MCF 10A (cell line): ENCODE measurements at regions of chr10 and their contacts with region 1.

Region 1: GRCh38 chr10:113058523-113058961 is 108.5 kb downstream of the TCF7L2 start:
- DNase-seq: peak; percentile 78
- H3K4me3 Mint-ChIP-seq: no peak overlapping the region
- H3K27ac Mint-ChIP-seq: no peak overlapping the region
- H3K4me1 Mint-ChIP-seq: peaks cover 15% of the 10 kb centered on the region
- H3K27me3 Mint-ChIP-seq: no peaks in the 10 kb centered on the region
- CTCF ChIP-seq: no peak

Region 2: GRCh38 chr10:112886463-112886862 is 172.1 kb before region 1 on chr10:
- CTCF ChIA-PET with region 1: no interaction called
- POLR2A ChIA-PET with region 1: no interaction called
- intact Hi-C with region 1: no loop called
- DNase-seq: no peak
- H3K4me3 Mint-ChIP-seq: no peak overlapping the region
- H3K27ac Mint-ChIP-seq: no peak overlapping the region
- H3K4me1 Mint-ChIP-seq: no peaks in the 10 kb centered on the region
- H3K27me3 Mint-ChIP-seq: no peaks in the 10 kb centered on the region
- CTCF ChIP-seq: no peak

Region 3: DNA sequence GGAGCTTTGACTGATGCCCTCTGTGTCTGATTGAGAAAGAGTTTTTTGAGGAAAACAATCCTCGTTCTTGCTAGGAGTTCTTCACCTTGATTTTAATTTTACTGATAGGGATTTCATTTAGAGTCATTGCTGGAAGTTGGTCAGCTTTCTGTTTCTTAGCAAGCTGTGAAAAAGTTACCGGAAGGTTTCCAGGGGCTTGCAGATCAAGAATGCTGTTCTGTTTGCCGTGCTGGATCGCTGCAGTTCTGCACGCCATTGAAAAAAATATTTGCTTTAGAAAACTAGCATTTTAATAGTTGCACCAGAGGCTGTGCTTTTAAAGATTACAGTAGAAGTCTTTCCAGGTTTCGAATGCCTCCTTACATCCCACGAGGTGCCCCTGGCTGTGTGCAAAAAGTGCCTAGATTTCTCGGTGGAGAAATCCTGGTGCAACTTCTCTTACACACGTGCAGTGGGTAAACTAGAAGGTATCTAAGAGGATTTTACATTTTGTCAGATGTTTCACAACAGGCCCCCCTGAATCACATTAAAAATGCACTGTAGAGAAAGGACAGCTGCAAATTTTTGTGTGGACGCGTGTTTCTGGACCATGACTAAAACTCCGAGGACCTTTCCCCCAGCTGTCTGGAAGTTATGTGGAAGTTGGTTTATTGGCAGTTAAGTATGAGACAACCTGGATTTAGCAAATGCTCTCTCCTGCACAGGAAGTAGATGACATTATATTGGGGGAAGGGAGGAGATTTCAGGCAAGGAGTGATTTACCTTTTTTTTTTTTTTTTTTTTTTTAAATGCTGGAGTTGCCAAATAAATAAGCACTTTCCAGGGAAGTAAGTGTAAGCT is 102.7 kb before region 1 on chr10:
- CTCF ChIA-PET with region 1: interaction called, 3 read pairs
- POLR2A ChIA-PET with region 1: interaction called, 37 read pairs
- intact Hi-C with region 1: loop called (anchors 2 kb)
- DNase-seq: peak; percentile 56
- H3K4me3 Mint-ChIP-seq: peak overlapping the region; percentile 76
- H3K27ac Mint-ChIP-seq: peak overlapping the region; percentile 87
- H3K4me1 Mint-ChIP-seq: peaks cover 67% of the 10 kb centered on the region
- H3K27me3 Mint-ChIP-seq: no peaks in the 10 kb centered on the region
- CTCF ChIP-seq: no peak

Region 4: DNA sequence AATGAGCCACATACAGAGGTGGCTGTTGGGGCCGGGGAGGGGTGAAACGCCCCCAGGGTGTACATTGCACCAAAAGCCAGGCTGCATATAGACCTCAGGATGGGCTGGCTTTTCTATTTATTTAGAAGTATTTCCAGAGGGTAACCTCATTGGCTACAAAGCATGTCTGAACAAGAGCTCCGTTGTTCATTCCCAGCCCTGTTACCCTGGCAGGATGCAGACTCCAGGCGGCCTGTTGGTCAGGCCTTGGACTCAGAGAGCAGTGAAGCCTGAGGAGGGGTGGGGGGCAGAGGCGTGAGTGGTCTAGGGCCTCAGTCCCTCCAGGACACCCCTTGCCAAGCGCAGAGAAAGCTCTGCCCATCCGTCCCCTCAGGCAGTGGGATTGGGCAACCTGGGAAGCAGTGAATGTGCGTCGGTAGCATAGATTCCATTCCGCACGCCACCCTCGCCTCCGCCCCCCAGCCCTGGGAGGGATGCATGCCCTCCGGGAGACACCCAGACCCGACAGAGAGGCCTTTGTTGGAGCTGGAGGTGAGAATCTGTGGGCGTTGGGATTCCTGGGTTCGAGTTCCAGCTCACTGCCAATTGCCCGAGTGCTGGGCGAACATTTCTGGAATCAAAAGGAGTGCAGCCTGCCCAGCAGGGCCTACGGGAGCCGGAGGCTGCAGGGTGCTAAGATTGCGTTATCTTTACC is 66.5 kb before region 1 on chr10:
- CTCF ChIA-PET with region 1: no interaction called
- POLR2A ChIA-PET with region 1: interaction called, 16 read pairs
- intact Hi-C with region 1: loop called (anchors 5 kb)
- DNase-seq: peak; percentile 86
- H3K4me3 Mint-ChIP-seq: peak overlapping the region; percentile 50
- H3K27ac Mint-ChIP-seq: peak overlapping the region; percentile 49
- H3K4me1 Mint-ChIP-seq: peaks cover 23% of the 10 kb centered on the region
- H3K27me3 Mint-ChIP-seq: no peaks in the 10 kb centered on the region
- CTCF ChIP-seq: no peak

Region 5: GRCh38 chr10:113045147-113046055 is 13.1 kb before region 1 on chr10:
- CTCF ChIA-PET with region 1: interaction called, 4 read pairs
- POLR2A ChIA-PET with region 1: interaction called, 25 read pairs
- intact Hi-C with region 1: no loop called
- DNase-seq: peak; percentile 89
- H3K4me3 Mint-ChIP-seq: peak overlapping the region; percentile 32
- H3K27ac Mint-ChIP-seq: peak overlapping the region; percentile 71
- H3K4me1 Mint-ChIP-seq: peaks cover 69% of the 10 kb centered on the region
- H3K27me3 Mint-ChIP-seq: no peaks in the 10 kb centered on the region
- CTCF ChIP-seq: no peak

Region 6: DNA sequence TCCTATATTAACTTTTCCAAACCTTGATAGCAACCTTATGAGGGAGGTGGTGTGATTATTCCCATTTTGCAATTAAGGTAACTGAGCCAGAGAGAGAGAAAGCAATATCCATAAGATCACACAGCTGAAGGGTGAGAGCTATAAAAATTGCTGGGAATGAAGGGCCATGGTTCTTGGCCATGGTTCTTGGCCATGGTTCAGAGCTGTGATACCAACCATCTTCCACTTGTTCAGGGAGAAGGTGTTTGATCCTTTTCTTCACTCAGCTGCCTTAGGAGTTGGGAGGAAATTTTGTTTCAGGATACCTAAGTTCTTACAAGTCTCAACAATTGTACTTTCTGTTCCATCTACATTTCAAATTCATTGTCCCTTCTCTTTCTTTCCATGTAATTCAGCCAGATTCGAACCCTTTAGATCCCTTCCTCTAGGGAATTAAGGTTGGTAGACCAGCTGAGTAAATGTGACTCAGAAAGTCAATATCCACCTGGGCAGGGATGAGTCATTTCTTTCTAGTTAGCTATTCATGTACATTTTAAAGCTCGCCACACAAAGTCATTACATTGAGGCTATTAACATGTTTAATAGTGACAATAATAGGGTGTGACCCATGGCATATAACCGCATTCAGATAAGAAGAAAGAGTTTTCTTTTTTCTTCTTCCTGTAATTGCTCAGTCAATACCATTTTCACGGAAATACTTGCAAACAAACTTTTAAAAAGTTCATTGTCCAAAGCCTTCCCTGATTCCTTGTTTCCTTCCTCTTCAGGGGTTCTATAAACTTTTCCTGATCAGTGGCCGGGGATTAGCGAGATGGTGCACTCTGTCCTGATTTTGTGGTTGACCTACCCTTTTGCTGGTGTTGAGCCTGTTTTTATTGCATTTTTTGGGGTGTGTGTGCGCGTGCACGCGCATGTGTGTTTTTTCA is 34.9 kb after region 1 on chr10:
- CTCF ChIA-PET with region 1: no interaction called
- POLR2A ChIA-PET with region 1: interaction called, 13 read pairs
- intact Hi-C with region 1: no loop called
- DNase-seq: peak; percentile 83
- H3K4me3 Mint-ChIP-seq: peak overlapping the region; percentile 51
- H3K27ac Mint-ChIP-seq: peak overlapping the region; percentile 36
- H3K4me1 Mint-ChIP-seq: peaks cover 21% of the 10 kb centered on the region
- H3K27me3 Mint-ChIP-seq: no peaks in the 10 kb centered on the region
- CTCF ChIP-seq: no peak

Region 7: DNA sequence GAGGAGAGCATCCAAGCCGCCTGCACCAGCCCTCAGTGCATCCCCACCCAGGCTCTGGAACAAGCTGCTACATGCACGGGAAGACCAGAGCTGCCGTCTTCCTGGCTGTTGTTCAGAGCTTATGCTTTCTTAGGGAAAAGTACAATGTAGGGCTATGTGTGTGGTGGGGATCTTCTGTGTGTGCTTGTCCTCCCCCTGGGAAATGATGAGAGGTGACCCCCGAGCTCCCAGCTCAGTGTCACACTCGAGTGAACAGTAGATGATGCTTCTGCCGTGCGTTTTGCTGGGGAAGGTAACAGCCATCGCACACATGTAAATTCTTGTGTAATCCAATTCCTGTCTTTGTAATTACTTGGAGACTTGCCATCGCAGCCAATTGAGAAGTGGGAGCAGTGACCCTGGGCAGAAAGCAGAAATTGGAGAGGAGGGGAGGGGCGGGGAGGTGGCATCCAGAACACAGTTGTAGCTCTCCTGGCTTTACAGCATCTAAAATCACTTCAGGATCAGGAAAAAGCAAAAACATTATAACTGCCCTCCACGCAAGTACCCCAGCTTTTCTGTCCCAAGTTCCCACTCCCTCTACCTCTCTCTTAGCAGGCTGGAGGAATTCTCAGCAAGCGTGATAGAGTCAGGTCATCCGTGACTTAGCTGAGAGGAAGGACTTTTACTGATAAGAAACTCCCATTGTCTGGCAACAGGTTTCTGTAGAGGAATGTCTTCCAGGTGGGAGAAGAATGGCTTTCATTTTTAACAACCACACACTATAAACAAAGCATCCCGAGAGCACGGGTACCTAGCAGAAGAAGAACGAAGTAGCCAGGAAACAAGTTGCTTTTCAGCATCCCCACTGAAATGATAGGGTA is 41.1 kb after region 1 on chr10:
- CTCF ChIA-PET with region 1: no interaction called
- POLR2A ChIA-PET with region 1: interaction called, 13 read pairs
- intact Hi-C with region 1: no loop called
- DNase-seq: peak; percentile 86
- H3K4me3 Mint-ChIP-seq: peak overlapping the region; percentile 32
- H3K27ac Mint-ChIP-seq: peak overlapping the region; percentile 53
- H3K4me1 Mint-ChIP-seq: peaks cover 15% of the 10 kb centered on the region
- H3K27me3 Mint-ChIP-seq: no peaks in the 10 kb centered on the region
- CTCF ChIP-seq: no peak

Region 8: DNA sequence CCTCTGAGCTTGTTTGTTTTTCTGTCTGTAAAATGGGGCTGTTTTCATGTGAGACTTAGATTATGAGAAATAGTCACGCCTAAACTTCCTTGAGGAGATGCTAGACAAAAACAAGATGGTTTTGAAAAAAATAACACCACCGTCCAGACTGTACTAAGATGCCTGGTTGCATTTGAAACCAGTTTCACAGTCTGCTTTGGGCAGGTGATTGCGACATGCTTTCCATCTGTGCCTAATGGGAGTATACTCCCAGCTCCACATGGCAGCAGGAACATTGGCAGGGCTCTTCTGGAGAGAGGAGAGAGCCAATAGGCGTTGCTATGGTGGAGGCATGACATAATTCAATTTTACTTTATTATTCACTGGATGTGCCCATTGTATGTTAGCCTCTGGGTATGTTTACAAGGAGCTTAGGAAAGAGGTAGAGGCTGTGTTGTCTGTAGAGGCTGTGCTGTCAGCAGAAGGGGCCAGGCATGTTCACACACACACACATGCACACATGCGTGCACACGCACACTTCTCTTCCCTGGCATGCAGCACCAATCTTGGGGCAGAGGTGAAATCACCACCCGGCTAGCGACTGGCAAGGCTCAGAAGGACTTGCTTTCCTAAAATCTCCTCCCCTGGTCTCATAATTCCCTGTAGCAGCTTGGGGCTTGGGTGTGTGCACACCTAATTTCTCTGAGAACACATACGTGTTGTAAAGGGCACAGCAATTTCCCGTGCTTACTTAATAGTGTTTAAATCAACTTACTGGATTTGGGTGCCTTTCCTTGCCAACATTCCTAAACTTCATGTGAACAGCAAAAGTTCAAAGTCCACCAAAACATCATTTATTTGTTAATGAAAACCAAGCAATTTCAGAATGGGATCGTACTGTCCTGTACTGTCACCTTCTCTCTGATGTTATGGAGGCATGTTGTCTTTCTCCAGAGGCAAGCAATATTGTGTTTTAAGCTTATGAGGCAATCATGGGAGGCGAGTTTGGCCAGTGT is 53.6 kb after region 1 on chr10:
- CTCF ChIA-PET with region 1: no interaction called
- POLR2A ChIA-PET with region 1: interaction called, 9 read pairs
- intact Hi-C with region 1: loop called (anchors 5 kb)
- DNase-seq: peak; percentile 91
- H3K4me3 Mint-ChIP-seq: no peak overlapping the region
- H3K27ac Mint-ChIP-seq: no peak overlapping the region
- H3K4me1 Mint-ChIP-seq: no peaks in the 10 kb centered on the region
- H3K27me3 Mint-ChIP-seq: no peaks in the 10 kb centered on the region
- CTCF ChIP-seq: no peak

Region 9: GRCh38 chr10:113521123-113521795 is 462.7 kb after region 1 on chr10:
- CTCF ChIA-PET with region 1: no interaction called
- POLR2A ChIA-PET with region 1: no interaction called
- intact Hi-C with region 1: no loop called
- DNase-seq: peak; percentile 69
- H3K4me3 Mint-ChIP-seq: no peak overlapping the region
- H3K27ac Mint-ChIP-seq: no peak overlapping the region
- H3K4me1 Mint-ChIP-seq: no peaks in the 10 kb centered on the region
- H3K27me3 Mint-ChIP-seq: peaks cover 35% of the 10 kb centered on the region
- CTCF ChIP-seq: peak; percentile 96